ENCODE measurements at regions of chr7 and their contacts with region 1.

Region 1: GRCh38 chr7:32347244-32347828 is 142.8 kb downstream of the LSM5 start:
- DNase-seq: peak; percentile 22
- H3K4me3 ChIP-seq: no peak overlapping the region
- H3K27ac ChIP-seq: no peak overlapping the region
- H3K4me1 ChIP-seq: no peaks in the 10 kb centered on the region
- H3K27me3 ChIP-seq: peaks cover 18% of the 10 kb centered on the region
- CTCF ChIP-seq: peak; percentile 85

Region 2: DNA sequence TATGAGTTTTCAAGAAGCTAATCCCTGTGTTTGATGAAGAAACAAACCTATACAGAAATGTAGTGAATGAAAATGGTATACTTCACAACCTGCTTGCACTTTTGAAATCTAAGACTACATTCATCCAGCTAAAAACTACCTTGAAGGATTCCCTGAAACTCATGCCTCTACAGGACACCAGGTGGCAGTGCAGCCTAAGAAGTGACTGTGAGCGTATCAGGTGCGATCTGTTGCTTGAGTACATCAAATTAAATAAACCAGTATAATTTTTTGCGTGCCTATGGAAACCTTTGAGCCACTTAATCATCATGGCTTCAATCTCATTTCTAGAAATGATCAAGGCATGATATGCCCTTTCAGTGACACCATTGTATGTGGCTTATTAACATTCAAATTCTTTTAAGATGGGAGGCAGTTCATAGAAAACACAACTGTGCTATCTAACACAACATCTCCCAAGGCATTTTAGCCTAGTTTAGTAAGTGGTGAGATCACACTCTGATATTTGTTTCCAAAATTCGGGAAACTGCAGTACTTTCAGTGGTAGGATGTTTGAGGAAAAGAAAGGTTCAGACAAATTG is 603.0 kb before region 1 on chr7:
- CTCF ChIA-PET with region 1: no interaction called
- POLR2A ChIA-PET with region 1: no interaction called
- intact Hi-C with region 1: loop called (anchors 5 kb)
- DNase-seq: peak; percentile 75
- H3K4me3 ChIP-seq: no peak overlapping the region
- H3K27ac ChIP-seq: no peak overlapping the region
- H3K4me1 ChIP-seq: no peaks in the 10 kb centered on the region
- H3K27me3 ChIP-seq: peaks cover 13% of the 10 kb centered on the region
- CTCF ChIP-seq: peak; percentile 88

Region 3: GRCh38 chr7:32212321-32212720 is 135.0 kb before region 1 on chr7:
- CTCF ChIA-PET with region 1: interaction called, 7 read pairs
- POLR2A ChIA-PET with region 1: no interaction called
- intact Hi-C with region 1: loop called (anchors 5 kb)
- DNase-seq: no peak
- H3K4me3 ChIP-seq: no peak overlapping the region
- H3K27ac ChIP-seq: no peak overlapping the region
- H3K4me1 ChIP-seq: no peaks in the 10 kb centered on the region
- H3K27me3 ChIP-seq: peaks cover 70% of the 10 kb centered on the region
- CTCF ChIP-seq: no peak

Region 4: DNA sequence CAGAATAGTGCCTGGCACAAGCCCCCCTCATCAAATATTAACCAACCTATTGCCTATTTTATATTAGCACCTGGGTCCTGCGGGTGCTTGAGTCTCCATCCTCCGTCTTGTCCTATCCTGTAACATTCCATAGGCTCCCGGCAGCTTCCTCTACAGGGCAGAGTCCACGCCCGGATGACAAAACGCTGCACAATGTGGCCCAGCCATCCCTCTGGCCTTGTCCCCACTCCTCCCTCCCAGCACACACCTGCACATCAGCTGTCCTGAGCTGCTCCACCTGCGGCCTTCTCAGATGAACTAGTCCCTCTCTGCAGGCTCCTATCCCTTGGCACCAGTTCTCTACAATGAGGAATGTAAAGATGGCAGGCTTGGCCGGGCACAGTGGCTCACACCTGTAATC is 123.6 kb before region 1 on chr7:
- CTCF ChIA-PET with region 1: no interaction called
- POLR2A ChIA-PET with region 1: no interaction called
- intact Hi-C with region 1: no loop called
- DNase-seq: no peak
- H3K4me3 ChIP-seq: no peak overlapping the region
- H3K27ac ChIP-seq: no peak overlapping the region
- H3K4me1 ChIP-seq: no peaks in the 10 kb centered on the region
- H3K27me3 ChIP-seq: peaks cover 7% of the 10 kb centered on the region
- CTCF ChIP-seq: no peak

Region 5: GRCh38 chr7:32314761-32315160 is 32.6 kb before region 1 on chr7:
- CTCF ChIA-PET with region 1: no interaction called
- POLR2A ChIA-PET with region 1: no interaction called
- intact Hi-C with region 1: no loop called
- DNase-seq: no peak
- H3K4me3 ChIP-seq: no peak overlapping the region
- H3K27ac ChIP-seq: no peak overlapping the region
- H3K4me1 ChIP-seq: no peaks in the 10 kb centered on the region
- H3K27me3 ChIP-seq: peaks cover 40% of the 10 kb centered on the region
- CTCF ChIP-seq: no peak

Region 6: GRCh38 chr7:32518534-32519140 is 171.3 kb after region 1 on chr7:
- CTCF ChIA-PET with region 1: no interaction called
- POLR2A ChIA-PET with region 1: no interaction called
- intact Hi-C with region 1: no loop called
- DNase-seq: peak; percentile 52
- H3K4me3 ChIP-seq: no peak overlapping the region
- H3K27ac ChIP-seq: no peak overlapping the region
- H3K4me1 ChIP-seq: no peaks in the 10 kb centered on the region
- H3K27me3 ChIP-seq: no peaks in the 10 kb centered on the region
- CTCF ChIP-seq: no peak

Measured in A673 (cell line).